Posterior vena cava (tissue), 2 donors: ENCODE measurements at regions of chr7 and their contacts with region 1.

Region 1: GRCh38 chr7:24349339-24349738 is 65.3 kb downstream of the NPY start:
- DNase-seq: no peak

Region 2: GRCh38 chr7:24336461-24336860 is 12.9 kb before region 1 on chr7:
- intact Hi-C with region 1: loop called in 1 of 2 experiments (anchors 1 kb)
- DNase-seq: no peak